Calu3 (cell line): ENCODE measurements at regions of chr1 and their contacts with region 1.

Region 1: DNA sequence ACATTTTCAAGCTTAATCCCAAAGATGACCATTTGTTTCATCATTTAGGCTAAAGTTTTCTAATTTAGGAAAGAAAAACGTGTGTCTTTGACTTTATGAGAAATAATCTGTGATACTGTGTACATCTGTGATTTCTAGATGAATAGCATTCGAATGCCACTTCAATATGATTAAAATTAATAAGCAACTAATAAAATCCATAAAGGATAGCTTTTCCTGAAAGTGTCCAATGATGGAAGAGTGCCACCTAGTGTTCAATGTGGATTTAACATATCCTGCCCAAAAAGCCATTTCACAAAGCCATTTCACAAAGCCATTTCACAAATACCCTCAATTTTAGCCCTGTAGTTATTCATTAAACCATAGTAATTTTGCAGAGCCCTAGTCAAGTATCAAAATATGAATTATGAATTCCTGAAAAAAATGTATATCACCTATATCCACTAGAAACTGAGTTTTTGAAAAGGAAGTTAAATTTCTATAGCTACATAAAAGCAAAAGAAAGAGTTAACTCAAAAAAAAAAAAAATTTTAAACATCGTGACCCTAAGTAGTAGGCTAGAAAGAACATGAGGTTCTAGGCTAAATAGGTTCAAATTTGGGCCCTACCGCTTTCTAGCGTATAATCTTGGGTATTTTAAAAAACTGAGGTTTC is 19.1 kb downstream of the NME7 start:
- DNase-seq: peak; percentile 46
- H3K4me3 Mint-ChIP-seq: no peak overlapping the region
- H3K27ac Mint-ChIP-seq: no peak overlapping the region
- H3K4me1 Mint-ChIP-seq: peaks cover 13% of the 10 kb centered on the region
- H3K27me3 Mint-ChIP-seq: no peaks in the 10 kb centered on the region
- CTCF ChIP-seq: peak; percentile 59

Region 2: GRCh38 chr1:168342572-168343280 is 1005.8 kb before region 1 on chr1:
- CTCF ChIA-PET with region 1: interaction called, 5 read pairs
- intact Hi-C with region 1: loop called (anchors 10 kb)
- DNase-seq: peak; percentile 89
- H3K4me3 Mint-ChIP-seq: peak overlapping the region; percentile 26
- H3K27ac Mint-ChIP-seq: no peak overlapping the region
- H3K4me1 Mint-ChIP-seq: peaks cover 1% of the 10 kb centered on the region
- H3K27me3 Mint-ChIP-seq: no peaks in the 10 kb centered on the region
- CTCF ChIP-seq: peak; percentile 84

Region 3: DNA sequence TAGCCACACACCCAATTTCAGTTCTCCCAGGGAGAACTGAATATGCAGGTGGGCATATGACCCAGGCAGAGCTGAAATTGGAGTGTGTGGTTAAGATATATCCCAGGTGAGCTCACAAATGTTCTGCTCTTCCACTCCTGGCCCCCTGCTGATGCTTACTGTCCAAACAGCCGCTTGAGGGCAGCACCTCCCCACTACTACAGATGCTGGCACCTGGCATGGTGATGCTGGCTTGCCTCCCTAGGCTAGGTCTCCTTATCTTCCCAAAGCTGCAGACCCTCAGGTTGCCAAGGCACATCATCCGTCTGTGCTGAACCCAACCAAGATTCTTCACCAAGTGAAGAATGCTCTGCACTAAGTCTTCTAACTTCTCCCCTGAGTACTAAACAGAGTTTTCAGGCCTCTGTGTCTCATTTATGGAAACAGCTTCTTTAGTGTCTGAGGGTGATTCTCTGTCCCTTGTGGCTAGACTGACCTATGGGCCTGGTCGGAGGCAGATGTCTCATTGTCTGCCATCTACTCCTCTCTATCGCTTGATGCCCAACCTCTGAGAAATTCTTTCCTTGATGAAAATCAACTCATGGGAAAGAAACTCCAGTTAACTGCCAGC is 744.9 kb before region 1 on chr1:
- CTCF ChIA-PET with region 1: interaction called, 51 read pairs
- intact Hi-C with region 1: loop called (anchors 1 kb)
- DNase-seq: peak; percentile 87
- H3K4me3 Mint-ChIP-seq: no peak overlapping the region
- H3K27ac Mint-ChIP-seq: no peak overlapping the region
- H3K4me1 Mint-ChIP-seq: peaks cover 24% of the 10 kb centered on the region
- H3K27me3 Mint-ChIP-seq: no peaks in the 10 kb centered on the region
- CTCF ChIP-seq: peak; percentile 83

Region 4: GRCh38 chr1:168907053-168907452 is 441.5 kb before region 1 on chr1:
- CTCF ChIA-PET with region 1: no interaction called
- intact Hi-C with region 1: loop called (anchors 10 kb)
- DNase-seq: peak; percentile 61
- H3K4me3 Mint-ChIP-seq: peak overlapping the region; percentile 36
- H3K27ac Mint-ChIP-seq: peak overlapping the region; percentile 98
- H3K4me1 Mint-ChIP-seq: peaks cover 53% of the 10 kb centered on the region
- H3K27me3 Mint-ChIP-seq: no peaks in the 10 kb centered on the region
- CTCF ChIP-seq: no peak

Region 5: GRCh38 chr1:169133801-169134502 is 214.6 kb before region 1 on chr1:
- CTCF ChIA-PET with region 1: interaction called, 3 read pairs
- intact Hi-C with region 1: loop called (anchors 5 kb)
- DNase-seq: no peak
- H3K4me3 Mint-ChIP-seq: no peak overlapping the region
- H3K27ac Mint-ChIP-seq: peak overlapping the region; percentile 80
- H3K4me1 Mint-ChIP-seq: peaks cover 55% of the 10 kb centered on the region
- H3K27me3 Mint-ChIP-seq: no peaks in the 10 kb centered on the region
- CTCF ChIP-seq: no peak

Region 6: GRCh38 chr1:169271098-169271497 is 77.4 kb before region 1 on chr1:
- CTCF ChIA-PET with region 1: no interaction called
- intact Hi-C with region 1: loop called (anchors 2 kb)
- DNase-seq: no peak
- H3K4me3 Mint-ChIP-seq: peak overlapping the region; percentile 40
- H3K27ac Mint-ChIP-seq: peak overlapping the region; percentile 66
- H3K4me1 Mint-ChIP-seq: peaks cover 13% of the 10 kb centered on the region
- H3K27me3 Mint-ChIP-seq: no peaks in the 10 kb centered on the region
- CTCF ChIP-seq: peak; percentile 8